Vagina (tissue), 2 donors: ENCODE measurements at regions of chr11 and their contacts with region 1.

Region 1: GRCh38 chr11:7903941-7904510 is 27.0 kb downstream of the OR10A6 start:
- DNase-seq: no peak
- H3K4me3 ChIP-seq: no peak overlapping the region
- H3K27ac ChIP-seq: no peak overlapping the region
- H3K4me1 ChIP-seq: no peaks in the 10 kb centered on the region
- H3K27me3 ChIP-seq: no peaks in the 10 kb centered on the region
- CTCF ChIP-seq: no peak
- POLR2A ChIP-seq: no peak

Region 2: DNA sequence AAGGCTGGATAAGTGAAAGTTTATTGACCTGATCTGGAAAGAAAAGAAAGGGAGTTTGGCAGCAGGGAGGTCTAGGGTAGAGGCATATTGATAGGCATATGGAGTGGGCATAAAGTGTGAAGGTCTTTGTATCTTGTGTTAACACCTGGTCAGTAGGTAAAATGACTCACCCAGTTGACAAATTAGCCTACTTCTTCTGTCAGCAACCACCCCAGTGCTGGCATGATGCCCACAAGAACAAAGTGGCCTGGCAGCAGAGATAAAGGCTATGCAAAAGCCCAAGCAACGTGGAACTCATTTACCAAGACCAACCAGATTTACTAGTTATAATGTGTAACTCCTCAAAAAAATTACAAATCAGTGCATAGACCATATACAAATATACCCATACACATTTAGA is 32.6 kb after region 1 on chr11:
- intact Hi-C with region 1: loop called (anchors 2 kb)
- DNase-seq: no peak
- H3K4me3 ChIP-seq: no peak overlapping the region
- H3K27ac ChIP-seq: no peak overlapping the region
- H3K4me1 ChIP-seq: no peaks in the 10 kb centered on the region
- H3K27me3 ChIP-seq: no peaks in the 10 kb centered on the region
- CTCF ChIP-seq: no peak
- POLR2A ChIP-seq: no peak

Region 3: DNA sequence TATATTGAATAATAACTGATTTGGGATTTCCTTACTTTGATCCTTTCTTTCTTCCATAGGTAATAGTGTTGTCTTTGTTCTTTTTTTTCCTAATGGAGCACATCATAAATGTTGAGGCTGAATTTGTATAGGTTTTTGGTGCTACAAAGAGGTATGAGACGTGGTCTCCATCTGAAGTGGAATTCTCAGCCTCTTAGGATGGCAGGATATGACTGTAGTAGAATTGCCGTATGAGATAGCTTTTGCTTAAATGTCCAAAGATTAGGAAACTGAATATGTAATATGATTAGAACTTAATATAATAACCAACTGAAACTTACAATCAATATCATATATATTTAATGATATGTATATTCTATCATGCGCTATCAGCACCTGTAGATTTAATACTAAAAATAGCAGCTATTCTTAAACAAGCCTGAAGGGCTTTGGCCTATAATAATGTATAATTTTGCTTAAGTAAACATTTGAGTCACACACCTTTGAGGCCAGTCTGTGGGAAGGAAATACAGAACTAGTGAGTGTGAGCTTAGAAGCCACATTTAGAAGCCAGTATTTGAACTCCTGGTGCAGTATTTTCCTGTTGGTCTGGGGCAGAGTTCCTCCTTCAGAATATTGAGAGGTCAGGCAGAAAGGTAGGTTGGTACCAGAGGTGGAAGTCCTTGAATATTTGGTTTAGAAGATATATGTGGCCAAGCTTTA is 1822.4 kb after region 1 on chr11:
- intact Hi-C with region 1: no loop called
- DNase-seq: no peak
- H3K4me3 ChIP-seq: no peak overlapping the region
- H3K27ac ChIP-seq: no peak overlapping the region
- H3K4me1 ChIP-seq: no peaks in the 10 kb centered on the region
- H3K27me3 ChIP-seq: no peaks in the 10 kb centered on the region
- CTCF ChIP-seq: no peak
- POLR2A ChIP-seq: no peak